ENCODE measurements at regions of chr19 and their contacts with region 1.

Region 1: DNA sequence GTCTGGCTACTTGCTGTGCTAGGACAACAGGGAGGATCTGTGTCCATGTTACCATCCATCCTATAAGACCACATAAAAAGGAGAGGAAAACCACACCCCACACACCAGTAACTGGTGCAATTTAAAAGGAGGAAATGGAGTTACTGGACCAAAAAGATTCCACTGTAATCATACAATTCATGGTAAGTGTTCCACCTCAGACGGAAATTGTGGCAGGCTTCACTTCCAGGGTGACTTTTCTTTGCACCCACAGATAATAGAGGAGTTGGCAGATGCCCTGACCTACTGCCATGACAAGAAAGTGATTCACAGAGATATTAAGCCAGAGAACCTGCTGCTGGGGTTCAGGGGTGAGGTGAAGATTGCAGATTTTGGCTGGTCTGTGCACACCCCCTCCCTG is 2.4 kb downstream of the AURKC start:
- DNase-seq: no peak
- H3K4me3 ChIP-seq: no peak overlapping the region
- H3K27ac ChIP-seq: no peak overlapping the region
- H3K4me1 ChIP-seq: no peaks in the 10 kb centered on the region
- H3K27me3 ChIP-seq: no peaks in the 10 kb centered on the region
- CTCF ChIP-seq: no peak
- POLR2A ChIP-seq: no peak

Region 2: DNA sequence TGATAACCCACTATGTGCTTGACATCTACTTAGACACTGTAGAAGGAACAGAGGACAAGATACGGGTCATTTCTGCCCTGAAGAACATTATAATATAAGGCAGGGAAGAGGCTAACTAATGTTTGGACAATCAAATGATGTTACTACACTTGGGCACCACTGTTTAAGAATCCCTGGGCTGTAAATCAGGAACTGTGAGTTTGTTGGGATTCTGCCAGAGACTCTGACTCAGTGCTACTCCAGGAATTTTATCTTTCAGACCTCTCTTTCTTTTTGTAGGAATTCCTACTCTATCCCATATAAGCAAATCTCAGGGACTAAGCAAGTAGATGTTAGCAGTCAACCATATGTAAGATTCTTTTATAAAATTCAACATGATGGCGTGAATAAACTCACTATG is 728.6 kb before region 1 on chr19:
- intact Hi-C with region 1: loop called (anchors 5 kb)
- DNase-seq: no peak
- H3K4me3 ChIP-seq: no peak overlapping the region
- H3K27ac ChIP-seq: no peak overlapping the region
- H3K4me1 ChIP-seq: no peaks in the 10 kb centered on the region
- H3K27me3 ChIP-seq: no peaks in the 10 kb centered on the region
- CTCF ChIP-seq: no peak
- POLR2A ChIP-seq: no peak

Region 3: DNA sequence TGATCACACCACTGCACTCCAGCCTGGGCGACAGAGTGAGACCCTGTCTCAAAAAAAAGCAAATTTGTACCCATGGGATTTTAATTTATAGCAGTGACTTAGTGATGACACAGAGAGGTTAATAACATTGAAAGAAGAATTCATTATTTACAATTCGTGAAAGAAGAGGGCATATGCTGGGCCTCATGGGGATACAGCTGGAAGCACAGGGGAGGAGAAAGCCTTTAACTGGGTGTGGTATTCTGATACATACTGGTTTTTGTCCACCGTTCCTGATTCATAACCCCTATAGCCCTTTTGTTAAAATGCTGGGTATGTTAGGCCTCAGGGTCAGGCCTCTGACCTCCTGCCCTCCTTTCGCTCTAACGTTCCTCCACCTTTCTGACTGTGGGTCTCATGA is 31.0 kb before region 1 on chr19:
- intact Hi-C with region 1: no loop called
- DNase-seq: no peak
- H3K4me3 ChIP-seq: no peak overlapping the region
- H3K27ac ChIP-seq: no peak overlapping the region
- H3K4me1 ChIP-seq: no peaks in the 10 kb centered on the region
- H3K27me3 ChIP-seq: no peaks in the 10 kb centered on the region
- CTCF ChIP-seq: no peak
- POLR2A ChIP-seq: no peak